ENCODE measurements at regions of chr14 and their contacts with region 1.

Region 1: DNA sequence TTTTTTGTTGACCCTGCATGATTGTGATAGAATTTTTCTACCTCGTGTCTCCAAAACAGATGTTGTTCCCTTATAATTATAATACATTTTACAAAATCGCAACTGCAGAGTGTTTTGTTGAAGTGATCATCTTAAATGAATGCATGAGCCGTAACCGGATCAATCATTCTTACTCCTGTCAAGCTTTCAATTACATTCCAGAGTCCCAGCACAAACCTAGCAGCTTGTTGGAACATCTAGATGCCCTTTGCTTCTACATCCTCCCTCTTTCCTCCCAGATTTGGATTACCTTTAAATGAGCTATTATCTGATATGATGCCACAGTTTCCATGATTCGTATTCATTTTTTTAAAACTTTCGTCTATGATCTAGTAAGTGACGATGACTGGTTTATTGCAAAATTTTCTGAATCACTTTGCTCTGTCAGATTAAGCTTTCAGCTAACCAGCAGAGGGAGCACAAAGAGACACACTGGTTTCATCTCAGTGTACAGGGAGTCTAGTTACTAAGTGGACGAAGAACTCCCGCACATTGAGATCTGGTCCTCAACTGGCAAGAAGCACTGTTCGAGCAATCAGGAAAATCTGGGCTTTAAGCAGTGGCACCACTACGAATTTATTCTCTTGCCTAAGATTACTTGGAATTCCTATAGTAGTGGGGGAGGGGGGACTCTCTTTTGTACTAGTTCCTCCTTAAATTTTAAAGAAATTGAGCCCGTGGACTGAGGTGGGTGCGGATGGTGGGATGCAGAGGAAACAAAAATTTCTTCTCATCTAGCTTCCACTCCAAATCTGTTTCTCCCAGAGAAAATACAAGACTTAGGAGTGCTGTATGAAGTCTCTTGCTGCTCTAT is 40.9 kb downstream of the TSHR start:
- DNase-seq: peak; percentile 66
- ATAC-seq: peak; percentile 97
- H3K4me3 ChIP-seq: no peak overlapping the region
- H3K27ac ChIP-seq: no peak overlapping the region
- H3K4me1 ChIP-seq: no peaks in the 10 kb centered on the region
- H3K27me3 ChIP-seq: peaks cover 0 to 11% of the 10 kb centered on the region in 2 experiments; a peak in 3 of 5 replicates
- CTCF ChIP-seq: peak; percentile 78
- EP300 ChIP-seq: no peak
- POLR2A ChIP-seq: no peak
- RAD21 ChIP-seq: peak; percentile 54; the same call in 1 of the 2 replicates

Region 2: GRCh38 chr14:80942183-80942600 is 54.1 kb before region 1 on chr14:
- CTCF ChIA-PET with region 1: no interaction called
- POLR2A ChIA-PET with region 1: no interaction called
- in situ Hi-C with region 1: no loop called
- intact Hi-C with region 1: no loop called
- DNase-seq: no peak
- ATAC-seq: peak; percentile 19
- H3K4me3 ChIP-seq: peak overlapping the region; percentile 64 to 91 (median 84); a peak in 5 of 6 replicates
- H3K27ac ChIP-seq: peak overlapping the region; percentile 33
- H3K4me1 ChIP-seq: peaks cover 18% of the 10 kb centered on the region; the same call in 1 of the 2 replicates
- H3K27me3 ChIP-seq: no peaks in the 10 kb centered on the region; a peak in 1 of 5 replicates
- CTCF ChIP-seq: no peak
- EP300 ChIP-seq: no peak
- POLR2A ChIP-seq: no peak
- RAD21 ChIP-seq: no peak

Region 3: GRCh38 chr14:81062816-81063215 is 66.5 kb after region 1 on chr14:
- CTCF ChIA-PET with region 1: interaction called, 3 read pairs
- POLR2A ChIA-PET with region 1: no interaction called
- in situ Hi-C with region 1: no loop called
- intact Hi-C with region 1: loop called (anchors 1 kb)
- DNase-seq: peak; percentile 10
- ATAC-seq: peak; percentile 90
- H3K4me3 ChIP-seq: no peak overlapping the region
- H3K27ac ChIP-seq: no peak overlapping the region
- H3K4me1 ChIP-seq: no peaks in the 10 kb centered on the region
- H3K27me3 ChIP-seq: no peaks in the 10 kb centered on the region
- CTCF ChIP-seq: peak; percentile 47
- EP300 ChIP-seq: no peak
- POLR2A ChIP-seq: no peak
- RAD21 ChIP-seq: 0 out of 2 replicates have a peak, but pooled peaks have one; percentile 16

Region 4: GRCh38 chr14:81164167-81164774 is 168.0 kb after region 1 on chr14:
- CTCF ChIA-PET with region 1: interaction called, 18 read pairs
- POLR2A ChIA-PET with region 1: interaction called, 6 read pairs
- in situ Hi-C with region 1: loop called (anchors 5 kb)
- intact Hi-C with region 1: loop called (anchors 1 kb)
- DNase-seq: peak; percentile 78
- ATAC-seq: peak; percentile 94
- H3K4me3 ChIP-seq: no peak overlapping the region; a peak in 1 of 6 replicates
- H3K27ac ChIP-seq: no peak overlapping the region
- H3K4me1 ChIP-seq: peaks cover 45% of the 10 kb centered on the region
- H3K27me3 ChIP-seq: no peaks in the 10 kb centered on the region
- CTCF ChIP-seq: peak; percentile 90
- EP300 ChIP-seq: no peak
- POLR2A ChIP-seq: no peak
- RAD21 ChIP-seq: peak; percentile 57

Region 5: GRCh38 chr14:81170104-81170828 is 174.0 kb after region 1 on chr14:
- CTCF ChIA-PET with region 1: interaction called, 18 read pairs
- POLR2A ChIA-PET with region 1: interaction called, 3 read pairs
- in situ Hi-C with region 1: loop called (anchors 5 kb)
- intact Hi-C with region 1: loop called (anchors 1 kb)
- DNase-seq: peak; percentile 84
- ATAC-seq: peak; percentile 98
- H3K4me3 ChIP-seq: peak overlapping the region; percentile 68 to 87 (median 80)
- H3K27ac ChIP-seq: peak overlapping the region; percentile 91
- H3K4me1 ChIP-seq: peaks cover 29% of the 10 kb centered on the region
- H3K27me3 ChIP-seq: no peaks in the 10 kb centered on the region
- CTCF ChIP-seq: peak; percentile 84
- EP300 ChIP-seq: no peak
- POLR2A ChIP-seq: peak; percentile 94 to 96
- RAD21 ChIP-seq: peak; percentile 69

Region 6: GRCh38 chr14:81211844-81212243 is 215.6 kb after region 1 on chr14:
- CTCF ChIA-PET with region 1: interaction called, 7 read pairs
- POLR2A ChIA-PET with region 1: no interaction called
- in situ Hi-C with region 1: no loop called
- intact Hi-C with region 1: loop called (anchors 1 kb)
- DNase-seq: peak; percentile 35
- ATAC-seq: peak; percentile 71
- H3K4me3 ChIP-seq: no peak overlapping the region
- H3K27ac ChIP-seq: no peak overlapping the region
- H3K4me1 ChIP-seq: no peaks in the 10 kb centered on the region
- H3K27me3 ChIP-seq: no peaks in the 10 kb centered on the region
- CTCF ChIP-seq: peak; percentile 48
- EP300 ChIP-seq: no peak
- POLR2A ChIP-seq: no peak
- RAD21 ChIP-seq: no peak

Region 7: GRCh38 chr14:81464247-81465002 is 468.1 kb after region 1 on chr14:
- CTCF ChIA-PET with region 1: interaction called, 11 read pairs
- POLR2A ChIA-PET with region 1: no interaction called
- in situ Hi-C with region 1: loop called (anchors 10 kb)
- intact Hi-C with region 1: loop called (anchors 1 kb)
- DNase-seq: peak; percentile 53
- ATAC-seq: 0 out of 3 replicates have a peak, but pooled peaks have one; percentile 18
- H3K4me3 ChIP-seq: peak overlapping the region; percentile 63 to 71 (median 65); a peak in 5 of 6 replicates
- H3K27ac ChIP-seq: no peak overlapping the region
- H3K4me1 ChIP-seq: peaks cover 29% of the 10 kb centered on the region
- H3K27me3 ChIP-seq: no peaks in the 10 kb centered on the region
- CTCF ChIP-seq: peak; percentile 83
- EP300 ChIP-seq: no peak
- POLR2A ChIP-seq: no peak
- RAD21 ChIP-seq: peak; percentile 67

Measured in HepG2 (cell line).